ENCODE measurements at regions of chr6 and their contacts with region 1.

Region 1: DNA sequence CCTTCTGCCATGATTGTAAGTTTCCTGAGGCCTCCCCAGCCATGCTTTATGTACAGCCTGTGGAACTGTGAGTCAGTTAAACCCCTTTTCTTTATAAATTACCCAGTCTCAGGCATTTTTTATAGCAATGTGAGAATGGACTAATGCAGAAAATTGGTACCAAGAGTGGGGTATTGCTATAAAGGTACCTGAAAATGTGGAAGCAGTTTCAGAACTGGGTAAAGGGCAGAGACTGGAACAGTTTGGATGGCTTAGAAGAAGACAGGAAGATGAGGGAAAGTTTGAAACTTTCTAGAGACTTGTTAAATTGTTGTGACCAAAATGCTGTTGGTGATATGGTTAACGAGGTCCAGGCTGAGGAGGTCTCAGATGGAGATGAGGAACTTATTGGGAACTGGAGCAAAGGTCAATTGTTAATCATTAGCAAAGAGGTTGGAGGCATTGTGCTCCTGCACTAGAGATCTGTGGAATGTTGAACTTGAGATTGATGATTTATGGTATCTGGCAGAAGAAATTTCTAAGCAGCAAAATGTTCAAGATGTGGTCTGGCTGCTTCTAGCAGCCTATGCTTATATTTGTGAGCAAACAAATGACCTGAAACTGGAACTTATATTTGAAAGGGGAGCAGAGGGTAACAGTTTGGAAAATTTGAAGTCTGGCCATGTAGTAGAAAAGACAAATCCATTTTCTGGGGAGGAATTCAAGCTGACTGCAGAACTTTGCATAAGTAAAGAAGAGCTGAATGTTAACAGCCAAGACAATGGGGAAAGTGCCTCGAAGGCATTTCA is 79.0 kb upstream of the GMDS start:
- DNase-seq: no peak
- H3K4me3 ChIP-seq: no peak overlapping the region
- H3K27ac ChIP-seq: no peak overlapping the region
- H3K4me1 ChIP-seq: no peaks in the 10 kb centered on the region
- H3K27me3 ChIP-seq: no peaks in the 10 kb centered on the region
- CTCF ChIP-seq: no peak

Region 2: GRCh38 chr6:2274981-2275891 is 49.1 kb before region 1 on chr6:
- intact Hi-C with region 1: loop called (anchors 10 kb)
- DNase-seq: no peak
- H3K4me3 ChIP-seq: no peak overlapping the region
- H3K27ac ChIP-seq: peak overlapping the region; percentile 5 to 6
- H3K4me1 ChIP-seq: peaks cover 0 to 13% (median 0%) of the 10 kb centered on the region in 4 donors
- H3K27me3 ChIP-seq: no peaks in the 10 kb centered on the region
- CTCF ChIP-seq: no peak